HepG2 (cell line): ENCODE measurements at regions of chr9 and their contacts with region 1.

Region 1: DNA sequence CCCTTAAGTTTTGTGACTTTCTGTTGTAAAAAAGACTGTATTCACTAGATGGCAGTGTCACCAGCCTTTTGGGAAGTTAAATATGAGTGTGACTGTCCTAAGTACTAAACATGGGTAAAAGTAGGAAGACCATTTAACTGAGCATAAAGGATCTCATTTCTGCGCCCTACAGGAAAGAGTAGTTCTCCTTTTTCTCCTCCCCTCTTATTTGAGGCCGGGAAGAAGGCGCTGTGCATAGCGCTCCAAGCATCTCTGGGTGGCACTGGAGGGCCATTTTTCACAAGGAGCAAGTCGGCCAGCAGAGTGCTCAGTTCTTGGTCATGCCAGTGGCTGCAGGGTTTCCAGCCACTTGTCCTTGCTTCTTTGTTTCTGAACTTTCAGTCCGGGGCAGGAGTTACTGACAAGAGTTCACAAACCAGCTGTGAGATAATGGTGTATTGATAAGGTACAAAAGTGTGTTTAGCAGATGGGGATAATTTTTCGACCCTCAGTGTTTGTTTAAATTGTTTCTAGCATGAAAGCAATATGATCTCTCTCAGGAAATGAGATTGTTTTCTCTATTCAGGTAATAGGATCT is 227.6 kb upstream of the DMRT1 start:
- DNase-seq: peak; percentile 88
- ATAC-seq: peak; percentile 99
- H3K4me3 ChIP-seq: peak overlapping the region in 2 of 3 experiments; percentile 17 to 26; a peak in 3 of 6 replicates
- H3K27ac ChIP-seq: peak overlapping the region; percentile 36
- H3K4me1 ChIP-seq: peaks cover 39% of the 10 kb centered on the region
- H3K27me3 ChIP-seq: no peaks in the 10 kb centered on the region
- CTCF ChIP-seq: peak; percentile 97
- EP300 ChIP-seq: peak in 1 of 2 experiments; percentile 37; a peak in 1 of 4 replicates
- POLR2A ChIP-seq: no peak
- RAD21 ChIP-seq: peak; percentile 97

Region 2: GRCh38 chr9:650362-650761 is 36.5 kb after region 1 on chr9:
- CTCF ChIA-PET with region 1: no interaction called
- POLR2A ChIA-PET with region 1: no interaction called
- in situ Hi-C with region 1: no loop called
- intact Hi-C with region 1: no loop called
- DNase-seq: no peak
- ATAC-seq: no peak
- H3K4me3 ChIP-seq: no peak overlapping the region
- H3K27ac ChIP-seq: no peak overlapping the region
- H3K4me1 ChIP-seq: 0 out of 2 replicates have a peak, but pooled peaks cover 6% of the 10 kb centered on the region
- H3K27me3 ChIP-seq: no peaks in the 10 kb centered on the region
- CTCF ChIP-seq: no peak
- EP300 ChIP-seq: no peak
- POLR2A ChIP-seq: no peak
- RAD21 ChIP-seq: no peak

Region 3: GRCh38 chr9:684054-684890 is 70.4 kb after region 1 on chr9:
- CTCF ChIA-PET with region 1: no interaction called
- POLR2A ChIA-PET with region 1: interaction called, 11 read pairs
- in situ Hi-C with region 1: no loop called
- intact Hi-C with region 1: loop called (anchors 1 kb)
- DNase-seq: no peak
- ATAC-seq: no peak
- H3K4me3 ChIP-seq: peak overlapping the region; percentile 67 to 74 (median 67)
- H3K27ac ChIP-seq: peak overlapping the region; percentile 94
- H3K4me1 ChIP-seq: peaks cover 79% of the 10 kb centered on the region
- H3K27me3 ChIP-seq: no peaks in the 10 kb centered on the region; a peak in 1 of 5 replicates
- CTCF ChIP-seq: no peak
- EP300 ChIP-seq: no peak
- POLR2A ChIP-seq: peak in 1 of 2 experiments; percentile 49; a peak in 1 of 4 replicates
- RAD21 ChIP-seq: no peak

Region 4: DNA sequence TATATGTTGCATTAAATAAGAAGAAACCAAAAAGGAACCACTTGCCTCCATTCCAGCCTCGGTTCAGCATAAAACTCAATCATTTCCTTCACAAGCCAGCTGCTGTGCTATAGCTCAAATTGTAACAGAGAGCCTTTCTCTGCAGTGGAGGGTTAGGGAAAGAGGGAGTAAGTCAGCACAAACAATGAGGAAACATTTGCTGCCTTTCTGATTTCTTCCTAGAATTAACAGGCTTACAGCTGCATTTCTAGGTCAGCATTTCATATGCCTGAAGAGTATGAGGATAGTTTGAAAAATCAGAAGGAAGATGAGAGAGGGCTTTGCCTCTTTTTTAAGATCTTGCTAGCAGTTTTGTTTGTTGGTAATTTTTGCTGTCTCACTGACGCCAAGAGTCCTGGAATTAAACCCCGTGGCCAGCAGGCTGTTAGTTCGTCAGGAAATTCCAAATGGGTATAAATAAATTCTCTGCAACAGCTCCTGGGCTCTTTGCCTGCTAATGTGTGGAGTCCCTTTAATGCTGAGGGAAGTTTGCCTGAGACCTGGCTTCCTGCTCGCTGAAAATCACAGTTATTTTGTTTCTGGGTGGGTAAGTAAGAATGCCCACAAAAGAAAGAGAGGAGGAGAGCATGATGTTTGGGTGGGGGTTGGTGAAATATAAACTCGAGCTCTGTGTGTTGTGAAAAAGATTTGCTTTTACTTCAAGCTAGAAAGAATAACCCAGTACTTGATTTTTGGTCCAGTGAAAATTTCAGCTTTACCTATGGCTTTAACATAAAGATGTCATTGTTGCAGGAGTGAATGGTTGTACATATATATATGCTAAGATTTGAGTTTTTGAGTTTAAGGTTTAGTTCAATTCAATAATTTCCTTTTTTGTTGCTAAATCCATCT is 79.6 kb after region 1 on chr9:
- CTCF ChIA-PET with region 1: interaction called, 11 read pairs
- POLR2A ChIA-PET with region 1: no interaction called
- in situ Hi-C with region 1: no loop called
- intact Hi-C with region 1: no loop called
- DNase-seq: peak; percentile 49
- ATAC-seq: peak; percentile 60; the same call in 2 of the 3 replicates
- H3K4me3 ChIP-seq: peak overlapping the region in 2 of 3 experiments; percentile 17 to 25; a peak in 1 of 6 replicates
- H3K27ac ChIP-seq: peak overlapping the region; percentile 49
- H3K4me1 ChIP-seq: peaks cover 97% of the 10 kb centered on the region
- H3K27me3 ChIP-seq: no peaks in the 10 kb centered on the region
- CTCF ChIP-seq: no peak
- EP300 ChIP-seq: no peak
- POLR2A ChIP-seq: no peak
- RAD21 ChIP-seq: no peak

Region 5: DNA sequence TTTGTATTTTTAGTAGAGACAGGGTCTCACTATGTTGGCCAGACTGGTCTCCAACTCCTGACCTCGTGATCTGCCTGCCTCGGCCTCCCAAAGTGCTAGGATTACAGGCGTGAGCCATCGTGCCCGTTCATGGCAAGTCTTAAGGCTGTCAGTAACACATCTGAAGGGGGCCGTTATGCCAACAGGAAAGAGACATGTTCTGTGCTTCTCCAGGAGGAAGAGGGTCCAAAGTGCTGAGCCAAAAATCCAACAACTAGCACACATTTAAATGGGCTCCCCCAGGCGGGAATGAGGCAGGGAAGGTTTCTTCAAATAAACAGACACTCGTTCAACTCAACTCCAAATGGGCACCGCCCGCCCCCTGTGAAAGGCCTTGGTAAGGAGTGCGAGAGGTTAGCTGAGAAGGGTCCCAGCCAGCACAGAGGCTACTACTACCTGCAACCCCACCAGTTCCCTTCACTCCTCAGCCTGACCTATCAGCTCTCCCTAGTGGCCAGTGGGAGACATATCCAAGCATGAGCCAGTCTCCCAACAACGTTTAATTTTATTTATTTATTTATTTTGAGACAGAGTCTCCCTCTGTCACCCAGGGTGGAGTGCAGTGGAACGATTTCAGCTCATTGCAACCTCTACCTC is 143.5 kb after region 1 on chr9:
- CTCF ChIA-PET with region 1: interaction called, 51 read pairs
- POLR2A ChIA-PET with region 1: no interaction called
- in situ Hi-C with region 1: loop called (anchors 5 kb)
- intact Hi-C with region 1: loop called (anchors 1 kb)
- DNase-seq: peak; percentile 69
- ATAC-seq: peak; percentile 72
- H3K4me3 ChIP-seq: no peak overlapping the region
- H3K27ac ChIP-seq: no peak overlapping the region
- H3K4me1 ChIP-seq: peaks cover 73% of the 10 kb centered on the region
- H3K27me3 ChIP-seq: no peaks in the 10 kb centered on the region
- CTCF ChIP-seq: peak; percentile 73
- EP300 ChIP-seq: no peak
- POLR2A ChIP-seq: no peak
- RAD21 ChIP-seq: peak; percentile 62

Region 6: DNA sequence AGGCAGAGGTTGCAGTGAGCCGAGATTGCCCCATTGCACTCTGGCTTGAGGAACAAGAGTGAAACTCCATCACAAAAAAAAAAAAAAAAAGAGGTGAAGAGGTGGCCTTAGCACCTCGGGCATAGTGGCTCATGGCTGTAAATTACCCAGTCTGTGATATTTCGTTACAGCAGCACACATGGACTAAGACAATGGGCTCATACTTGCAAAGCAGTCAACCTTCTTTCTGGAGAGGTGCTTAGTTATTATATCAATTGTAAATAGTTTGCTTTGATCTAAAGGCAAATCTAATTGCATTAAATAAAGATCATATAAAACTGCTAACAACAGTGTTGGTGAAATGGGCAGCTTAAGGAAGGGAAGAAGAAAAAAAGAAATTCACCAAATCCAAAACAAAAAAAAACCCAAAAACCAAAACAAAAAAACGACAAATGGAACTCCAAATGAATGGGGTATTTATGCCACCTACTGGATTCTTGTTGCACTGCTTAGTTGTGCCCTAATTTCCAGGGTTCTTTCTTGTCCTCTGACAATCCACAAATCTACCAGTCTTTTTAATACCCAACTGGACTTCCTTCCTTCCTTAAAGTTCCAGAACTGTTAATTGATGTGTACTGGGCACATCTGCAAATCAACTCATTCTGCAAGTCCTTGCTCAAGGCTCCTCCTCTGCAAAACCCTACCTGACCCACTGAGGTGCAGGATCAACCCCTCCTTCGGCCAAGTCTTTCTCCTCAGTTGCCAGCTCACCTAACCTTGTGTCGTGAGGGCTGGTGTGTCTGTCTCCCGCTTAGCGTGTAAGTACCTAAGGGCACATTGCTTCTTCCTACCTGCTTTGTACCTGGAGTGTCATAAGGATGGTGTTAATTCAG is 192.7 kb after region 1 on chr9:
- CTCF ChIA-PET with region 1: interaction called, 64 read pairs
- POLR2A ChIA-PET with region 1: no interaction called
- in situ Hi-C with region 1: loop called (anchors 5 kb)
- intact Hi-C with region 1: loop called (anchors 1 kb)
- DNase-seq: peak; percentile 35
- ATAC-seq: peak; percentile 79
- H3K4me3 ChIP-seq: no peak overlapping the region
- H3K27ac ChIP-seq: no peak overlapping the region
- H3K4me1 ChIP-seq: no peaks in the 10 kb centered on the region
- H3K27me3 ChIP-seq: no peaks in the 10 kb centered on the region
- CTCF ChIP-seq: peak; percentile 73
- EP300 ChIP-seq: no peak
- POLR2A ChIP-seq: no peak
- RAD21 ChIP-seq: peak; percentile 48